Caco-2 (cell line): ENCODE measurements at regions of chrX and their contacts with region 1.

Region 1: DNA sequence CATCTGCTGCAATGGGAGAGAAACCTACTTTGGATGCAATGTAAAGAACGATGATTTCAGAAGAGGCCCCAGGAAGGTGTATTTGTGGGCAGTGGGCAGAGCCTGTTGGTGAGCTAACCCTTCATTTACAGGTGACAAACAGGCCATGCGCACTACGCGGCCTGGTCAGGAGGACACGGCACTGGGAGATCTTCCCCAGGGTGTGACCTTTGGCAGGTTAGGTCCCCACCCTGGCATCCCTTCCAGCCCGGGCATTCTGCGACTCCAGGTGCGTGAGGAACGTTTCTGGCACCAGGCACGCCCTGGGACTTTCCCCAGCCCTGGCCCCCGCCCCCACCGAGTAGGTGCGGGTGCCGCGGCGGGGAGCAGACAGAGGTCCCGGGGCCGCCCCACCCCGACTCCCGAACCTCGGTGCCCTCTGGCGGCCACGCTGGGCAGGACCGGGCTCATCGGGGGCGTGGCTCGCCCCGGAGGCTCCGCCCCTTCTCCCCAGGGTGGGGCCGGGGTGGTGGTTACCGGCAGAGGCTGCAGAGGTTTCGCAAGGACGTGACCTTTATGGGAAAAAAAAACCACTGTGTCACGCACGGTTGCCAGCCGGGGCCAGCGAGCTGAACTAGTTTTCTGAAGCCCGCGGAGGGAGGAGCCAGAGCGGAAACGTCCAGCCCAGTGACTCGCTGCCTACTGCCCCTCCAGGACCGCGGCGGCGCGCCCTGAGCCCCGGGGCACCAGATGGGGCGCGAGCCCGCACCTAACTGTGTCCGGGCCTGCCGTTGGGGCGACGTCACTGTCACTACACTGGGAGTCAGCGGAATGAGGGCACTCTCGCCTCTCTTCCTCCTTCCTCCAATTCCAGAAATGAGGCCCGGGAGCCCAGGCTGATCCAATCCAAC is 5.0 kb upstream of the NYX start:
- DNase-seq: peak; percentile 92 to 93
- H3K4me3 ChIP-seq: peak overlapping the region; percentile 26
- H3K4me3 Mint-ChIP-seq: peak overlapping the region; percentile 78
- H3K27ac Mint-ChIP-seq: peak overlapping the region; percentile 94
- H3K4me1 ChIP-seq: peaks cover 9% of the 10 kb centered on the region
- H3K4me1 Mint-ChIP-seq: peaks cover 11% of the 10 kb centered on the region
- H3K27me3 ChIP-seq: no peaks in the 10 kb centered on the region
- H3K27me3 Mint-ChIP-seq: no peaks in the 10 kb centered on the region
- CTCF ChIP-seq: peak; percentile 16 to 50

Region 2: GRCh38 chrX:41275661-41276609 is 166.2 kb before region 1 on chrX:
- CTCF ChIA-PET with region 1: no interaction called
- POLR2A ChIA-PET with region 1: no interaction called
- intact Hi-C with region 1: loop called (anchors 1 kb)
- DNase-seq: peak; percentile 74 to 80
- H3K4me3 ChIP-seq: peak overlapping the region; percentile 72
- H3K4me3 Mint-ChIP-seq: peak overlapping the region; percentile 81
- H3K27ac Mint-ChIP-seq: no peak overlapping the region
- H3K4me1 ChIP-seq: no peaks in the 10 kb centered on the region
- H3K4me1 Mint-ChIP-seq: no peaks in the 10 kb centered on the region
- H3K27me3 ChIP-seq: no peaks in the 10 kb centered on the region
- H3K27me3 Mint-ChIP-seq: no peaks in the 10 kb centered on the region
- CTCF ChIP-seq: peak; percentile 29 to 53

Region 3: DNA sequence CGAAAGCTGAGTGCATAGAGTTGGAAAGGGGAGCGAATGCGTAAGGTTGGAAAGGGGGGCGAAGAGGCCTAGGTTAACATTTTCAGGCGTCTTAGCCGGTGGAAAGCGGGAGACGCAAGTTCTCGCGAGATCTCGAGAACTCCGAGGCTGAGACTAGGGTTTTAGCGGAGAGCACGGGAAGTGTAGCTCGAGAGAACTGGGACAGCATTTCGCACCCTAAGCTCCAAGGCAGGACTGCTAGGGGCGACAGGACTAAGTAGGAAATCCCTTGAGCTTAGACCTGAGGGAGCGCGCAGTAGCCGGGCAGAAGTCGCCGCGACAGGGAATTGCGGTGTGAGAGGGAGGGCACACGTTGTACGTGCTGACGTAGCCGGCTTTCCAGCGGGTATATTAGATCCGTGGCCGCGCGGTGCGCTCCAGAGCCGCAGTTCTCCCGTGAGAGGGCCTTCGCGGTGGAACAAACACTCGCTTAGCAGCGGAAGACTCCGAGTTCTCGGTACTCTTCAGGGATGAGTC is 108.4 kb before region 1 on chrX and contains the start of gene DDX3X:
- CTCF ChIA-PET with region 1: no interaction called
- POLR2A ChIA-PET with region 1: interaction called, 3 read pairs
- intact Hi-C with region 1: loop called (anchors 10 kb)
- DNase-seq: peak; percentile 83 to 84
- H3K4me3 ChIP-seq: peak within 1 kb of the TSS; percentile 85
- H3K4me3 Mint-ChIP-seq: peak within 1 kb of the TSS; percentile 88
- H3K27ac Mint-ChIP-seq: peak within 1 kb of the TSS; percentile 100
- H3K4me1 ChIP-seq: peaks cover 8% of the 10 kb centered on the region; the same call in 1 of the 2 replicates
- H3K4me1 Mint-ChIP-seq: no peaks in the 10 kb centered on the region
- H3K27me3 ChIP-seq: no peaks in the 10 kb centered on the region
- H3K27me3 Mint-ChIP-seq: no peaks in the 10 kb centered on the region
- CTCF ChIP-seq: no peak
- total RNA-seq, gene DDX3X: 281 and 302 TPM in 2 replicates

Region 4: GRCh38 chrX:41475591-41476241 is 33.5 kb after region 1 on chrX:
- CTCF ChIA-PET with region 1: interaction called, 5 read pairs
- POLR2A ChIA-PET with region 1: interaction called, 3 read pairs
- intact Hi-C with region 1: loop called (anchors 2 kb)
- DNase-seq: peak; percentile 69 to 71
- H3K4me3 ChIP-seq: no peak overlapping the region
- H3K4me3 Mint-ChIP-seq: peak overlapping the region; percentile 67
- H3K27ac Mint-ChIP-seq: peak overlapping the region; percentile 95
- H3K4me1 ChIP-seq: peaks cover 36% of the 10 kb centered on the region
- H3K4me1 Mint-ChIP-seq: peaks cover 11% of the 10 kb centered on the region
- H3K27me3 ChIP-seq: no peaks in the 10 kb centered on the region
- H3K27me3 Mint-ChIP-seq: no peaks in the 10 kb centered on the region
- CTCF ChIP-seq: no peak

Region 5: DNA sequence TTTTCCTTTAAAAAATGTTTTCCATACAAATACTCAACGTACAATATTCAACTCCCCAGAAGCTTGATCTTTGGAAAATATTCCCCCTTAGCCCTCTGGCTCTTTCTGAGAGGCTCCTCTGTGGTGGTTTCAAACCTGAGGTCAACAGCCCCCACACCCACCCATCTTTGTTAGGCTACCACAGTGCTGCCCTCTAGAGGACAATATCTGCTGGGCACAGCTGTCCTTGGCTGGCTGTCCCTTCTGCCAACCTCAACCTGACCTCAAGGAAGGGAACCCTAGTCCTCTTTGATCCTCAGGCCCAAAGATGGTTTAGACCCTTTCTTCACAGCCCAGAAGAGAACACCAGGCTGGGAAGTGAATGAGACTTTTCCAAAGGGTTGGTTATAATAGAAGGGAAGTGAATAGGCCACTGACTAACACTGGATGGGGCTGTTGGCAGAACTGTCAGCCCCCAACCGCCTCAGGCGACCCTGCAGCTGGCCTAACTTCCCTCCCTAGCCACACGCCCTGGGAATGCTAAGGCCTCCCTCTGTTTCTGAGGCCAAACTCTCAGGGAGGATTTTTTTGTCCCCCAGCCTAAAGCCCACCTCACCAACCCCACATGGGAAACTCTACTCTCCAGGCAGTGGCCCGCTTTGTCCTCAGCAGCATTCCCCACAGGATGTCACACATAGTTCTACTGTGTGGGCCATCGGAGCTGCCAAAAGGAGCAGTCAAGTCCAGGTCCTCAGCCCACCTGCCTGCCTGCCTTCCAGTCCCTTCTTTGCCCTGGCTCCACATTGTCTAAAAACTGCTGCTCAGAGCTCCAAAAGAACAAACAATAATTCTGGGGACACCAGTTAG is 39.3 kb after region 1 on chrX:
- CTCF ChIA-PET with region 1: interaction called, 5 read pairs
- POLR2A ChIA-PET with region 1: no interaction called
- intact Hi-C with region 1: loop called (anchors 1 kb)
- DNase-seq: peak; percentile 42 to 46
- H3K4me3 ChIP-seq: no peak overlapping the region
- H3K4me3 Mint-ChIP-seq: peak overlapping the region; percentile 59
- H3K27ac Mint-ChIP-seq: peak overlapping the region; percentile 97
- H3K4me1 ChIP-seq: peaks cover 35% of the 10 kb centered on the region
- H3K4me1 Mint-ChIP-seq: peaks cover 9% of the 10 kb centered on the region
- H3K27me3 ChIP-seq: no peaks in the 10 kb centered on the region
- H3K27me3 Mint-ChIP-seq: no peaks in the 10 kb centered on the region
- CTCF ChIP-seq: peak in 1 of 2 experiments; percentile 11

Region 6: DNA sequence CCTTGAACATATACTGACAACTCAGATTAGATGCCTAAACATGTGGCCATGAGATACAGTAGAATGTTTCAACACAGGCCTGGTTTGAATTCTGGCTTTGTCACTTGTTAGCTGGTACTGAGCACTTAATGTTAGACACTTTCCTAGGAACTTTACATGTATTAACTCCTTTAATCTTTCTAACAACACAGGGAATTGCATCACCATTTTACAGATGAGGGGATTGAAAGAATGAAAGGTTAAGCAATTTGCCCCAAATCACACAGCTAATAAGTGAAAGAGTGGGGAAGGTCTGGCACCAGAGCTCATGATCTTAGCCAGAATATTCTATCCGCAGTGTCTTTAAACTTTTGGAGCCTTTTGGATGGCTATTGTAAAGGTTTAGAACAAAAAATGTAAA is 100.8 kb after region 1 on chrX:
- CTCF ChIA-PET with region 1: no interaction called
- POLR2A ChIA-PET with region 1: no interaction called
- intact Hi-C with region 1: no loop called
- DNase-seq: no peak
- H3K4me3 ChIP-seq: no peak overlapping the region
- H3K4me3 Mint-ChIP-seq: no peak overlapping the region
- H3K27ac Mint-ChIP-seq: no peak overlapping the region
- H3K4me1 ChIP-seq: peaks cover 27% of the 10 kb centered on the region
- H3K4me1 Mint-ChIP-seq: peaks cover 6% of the 10 kb centered on the region
- H3K27me3 ChIP-seq: no peaks in the 10 kb centered on the region
- H3K27me3 Mint-ChIP-seq: no peaks in the 10 kb centered on the region
- CTCF ChIP-seq: no peak